CD14-positive monocyte (primary cell): ENCODE measurements at regions of chr21 and their contacts with region 1.

Region 1: GRCh38 chr21:42009831-42010523 is at the start of gene ZBTB21:
- DNase-seq: peak; percentile 97
- H3K4me3 ChIP-seq: peak within 1 kb of the TSS; percentile 50 to 81 (median 63)
- H3K4me3 Mint-ChIP-seq: peak within 1 kb of the TSS; percentile 93 to 97
- H3K27ac ChIP-seq: peak within 1 kb of the TSS; percentile 93 to 94
- H3K27ac Mint-ChIP-seq: peak within 1 kb of the TSS; percentile 99 to 100 (median 99)
- H3K4me1 ChIP-seq: peaks cover 10 to 19% of the 10 kb centered on the region in 2 donors
- H3K4me1 Mint-ChIP-seq: peaks cover 19% of the 10 kb centered on the region
- H3K27me3 ChIP-seq: peaks cover 10 to 23% of the 10 kb centered on the region in 2 donors
- H3K27me3 Mint-ChIP-seq: peaks cover 24% of the 10 kb centered on the region in 3 donors
- CTCF ChIP-seq: no peak
- polyA plus RNA-seq, gene ZBTB21: 4.7 to 7.2 (median 6.3) TPM

Region 2: DNA sequence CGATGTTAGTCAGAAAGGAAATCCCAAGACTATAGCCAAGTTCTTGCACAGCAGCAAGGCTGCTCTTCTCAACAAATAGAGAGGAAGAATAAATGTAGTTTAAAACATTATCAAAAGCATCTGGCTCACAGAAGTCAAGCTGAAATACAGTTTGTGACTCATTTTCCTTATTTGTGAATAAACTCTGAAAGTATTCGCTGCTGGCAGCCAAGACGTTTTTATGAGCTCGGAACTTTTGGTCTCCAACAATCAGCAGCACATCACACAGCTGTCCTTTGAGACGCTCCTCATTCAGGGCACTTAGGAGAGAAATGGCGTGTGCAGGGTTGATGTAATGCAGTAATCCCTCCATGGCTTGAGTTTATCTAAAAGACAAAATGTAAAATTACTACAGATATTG is 16.2 kb before region 1 on chr21:
- intact Hi-C with region 1: no loop called
- DNase-seq: no peak
- H3K4me3 ChIP-seq: no peak overlapping the region
- H3K4me3 Mint-ChIP-seq: no peak overlapping the region
- H3K27ac ChIP-seq: no peak overlapping the region
- H3K27ac Mint-ChIP-seq: no peak overlapping the region
- H3K4me1 ChIP-seq: no peaks in the 10 kb centered on the region
- H3K4me1 Mint-ChIP-seq: peaks cover 2% of the 10 kb centered on the region
- H3K27me3 ChIP-seq: no peaks in the 10 kb centered on the region
- H3K27me3 Mint-ChIP-seq: peaks cover 0 to 2% (median 0%) of the 10 kb centered on the region in 3 donors
- CTCF ChIP-seq: no peak

Region 3: DNA sequence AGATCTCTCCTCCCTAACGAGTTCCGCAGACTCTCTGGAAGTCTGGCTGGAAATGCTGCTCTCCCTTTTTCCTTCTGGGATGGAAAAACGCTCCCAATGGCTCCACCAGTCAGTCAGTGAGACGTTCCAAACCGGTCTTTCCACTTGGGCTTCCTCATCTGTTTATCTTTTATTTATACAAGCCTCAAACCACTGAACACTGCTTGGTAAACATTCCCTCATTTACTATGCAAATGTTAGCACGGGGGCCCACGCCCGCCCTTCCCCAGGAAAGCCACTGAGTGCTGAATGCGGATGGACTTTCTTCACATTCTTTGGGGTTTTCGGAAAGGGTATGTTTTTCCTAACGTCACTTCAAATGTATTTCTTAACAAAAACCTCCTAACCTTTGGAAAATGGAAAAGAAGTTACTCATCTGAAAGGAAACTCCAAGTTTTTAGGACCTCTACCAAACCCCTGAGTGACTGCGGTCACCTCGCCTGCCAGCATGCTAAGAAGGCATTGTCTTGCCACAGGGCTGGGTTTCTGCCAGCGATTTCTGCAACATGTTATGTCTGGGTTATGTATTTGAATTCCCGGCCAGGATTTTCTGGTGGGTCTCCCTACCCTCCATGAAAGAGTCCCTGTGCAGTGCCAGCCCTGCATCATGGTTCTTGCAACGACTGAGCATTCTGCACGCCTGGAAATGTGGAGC is 47.2 kb after region 1 on chr21:
- intact Hi-C with region 1: loop called (anchors 2 to 5 kb)
- DNase-seq: no peak
- H3K4me3 ChIP-seq: no peak overlapping the region
- H3K4me3 Mint-ChIP-seq: no peak overlapping the region
- H3K27ac ChIP-seq: no peak overlapping the region
- H3K27ac Mint-ChIP-seq: peak overlapping the region in 1 of 7 donors; percentile 6
- H3K4me1 ChIP-seq: peaks cover 41 to 48% of the 10 kb centered on the region in 2 donors
- H3K4me1 Mint-ChIP-seq: peaks cover 45% of the 10 kb centered on the region
- H3K27me3 ChIP-seq: peaks cover 0 to 5% of the 10 kb centered on the region in 2 donors
- H3K27me3 Mint-ChIP-seq: peaks cover 2 to 11% (median 11%) of the 10 kb centered on the region in 3 donors
- CTCF ChIP-seq: no peak

Region 4: DNA sequence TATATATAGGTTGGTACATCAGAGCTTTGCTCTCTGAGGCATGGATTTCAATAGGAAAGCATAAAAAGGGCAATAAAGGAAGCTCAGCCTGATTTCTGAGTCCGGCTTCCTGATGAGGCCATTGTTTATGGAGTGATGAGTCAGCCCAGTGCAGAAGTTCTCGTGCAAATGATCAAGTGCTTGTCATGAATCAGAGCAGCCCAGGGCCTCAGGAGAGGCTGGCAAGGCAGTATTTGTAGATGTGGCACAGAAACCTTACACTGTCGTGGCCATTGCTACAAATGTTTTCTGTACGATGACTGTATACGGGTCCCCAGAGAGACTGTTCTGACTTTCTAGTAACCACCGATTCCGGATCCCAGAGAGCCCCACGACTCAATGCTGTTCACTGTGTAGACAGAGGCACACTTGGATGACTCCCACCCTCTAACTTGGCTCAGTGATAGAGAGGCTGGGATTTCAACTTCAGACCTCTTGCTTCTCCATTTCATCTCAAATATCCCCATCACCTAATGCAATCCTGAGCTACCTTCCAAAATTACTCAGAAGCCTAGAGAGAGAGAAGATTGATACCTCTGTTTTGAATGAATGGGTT is 88.0 kb after region 1 on chr21:
- intact Hi-C with region 1: loop called in 1 of 2 experiments (anchors 5 kb)
- DNase-seq: peak; percentile 89 to 98 (median 94)
- H3K4me3 ChIP-seq: no peak overlapping the region
- H3K4me3 Mint-ChIP-seq: no peak overlapping the region
- H3K27ac ChIP-seq: peak overlapping the region; percentile 57 to 77
- H3K27ac Mint-ChIP-seq: peak overlapping the region; percentile 87 to 99 (median 89)
- H3K4me1 ChIP-seq: peaks cover 12 to 14% of the 10 kb centered on the region in 2 donors
- H3K4me1 Mint-ChIP-seq: peaks cover 18% of the 10 kb centered on the region
- H3K27me3 ChIP-seq: no peaks in the 10 kb centered on the region
- H3K27me3 Mint-ChIP-seq: peaks cover 1 to 6% (median 3%) of the 10 kb centered on the region in 3 donors
- CTCF ChIP-seq: no peak

Region 5: GRCh38 chr21:42117229-42117966 is 107.4 kb after region 1 on chr21:
- intact Hi-C with region 1: loop called (anchors 5 kb)
- DNase-seq: peak; percentile 62 to 80 (median 66)
- H3K4me3 ChIP-seq: no peak overlapping the region
- H3K4me3 Mint-ChIP-seq: peak overlapping the region in 1 of 2 donors; percentile 84
- H3K27ac ChIP-seq: no peak overlapping the region
- H3K27ac Mint-ChIP-seq: peak overlapping the region in 4 of 7 donors; percentile 18 to 46 (median 36)
- H3K4me1 ChIP-seq: peaks cover 40 to 42% of the 10 kb centered on the region in 2 donors
- H3K4me1 Mint-ChIP-seq: peaks cover 51% of the 10 kb centered on the region
- H3K27me3 ChIP-seq: peaks cover 5 to 33% of the 10 kb centered on the region in 2 donors
- H3K27me3 Mint-ChIP-seq: peaks cover 30 to 48% (median 39%) of the 10 kb centered on the region in 3 donors
- CTCF ChIP-seq: peak; percentile 98